AG04450 (cell line): ENCODE measurements at regions of chr15 and their contacts with region 1.

Region 1: DNA sequence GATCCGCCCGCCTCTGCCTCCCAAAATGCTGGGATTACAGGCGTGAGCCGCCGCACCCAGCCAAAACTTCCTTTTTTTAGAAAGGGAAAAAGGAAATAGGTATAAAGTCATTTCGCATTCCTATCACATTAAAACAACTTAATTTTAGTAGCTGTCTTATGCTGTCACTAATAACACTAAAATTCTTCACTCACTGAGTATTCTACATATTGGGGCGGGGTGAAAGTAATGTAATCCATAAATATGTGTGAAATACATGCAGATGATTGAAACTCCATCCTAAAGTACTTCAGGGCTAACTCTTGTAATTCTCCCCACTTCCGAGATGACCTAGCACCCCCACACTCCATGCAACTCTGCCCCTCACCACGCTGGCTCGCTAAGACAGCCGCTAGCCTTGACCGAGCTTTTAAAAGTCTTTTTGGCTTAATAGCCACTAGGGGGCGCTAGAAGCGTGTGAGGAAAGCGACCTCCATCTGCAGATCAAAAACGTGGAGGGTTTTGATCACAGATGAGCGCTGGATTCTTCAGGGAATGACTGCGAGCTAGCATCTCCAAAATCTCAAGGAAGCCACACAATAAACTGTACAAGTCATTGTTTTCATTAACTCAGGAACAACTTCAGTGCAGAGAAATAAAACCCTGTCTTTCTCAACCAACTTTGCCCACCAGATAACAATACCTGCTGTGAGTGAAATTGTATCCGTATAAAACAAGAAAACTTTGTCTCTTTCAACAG is 129.3 kb upstream of the IGF1R start:
- DNase-seq: peak; percentile 52
- H3K4me3 ChIP-seq: no peak overlapping the region
- H3K27ac ChIP-seq: no peak overlapping the region
- H3K27me3 ChIP-seq: no peaks in the 10 kb centered on the region
- CTCF ChIP-seq: peak; percentile 82

Region 2: DNA sequence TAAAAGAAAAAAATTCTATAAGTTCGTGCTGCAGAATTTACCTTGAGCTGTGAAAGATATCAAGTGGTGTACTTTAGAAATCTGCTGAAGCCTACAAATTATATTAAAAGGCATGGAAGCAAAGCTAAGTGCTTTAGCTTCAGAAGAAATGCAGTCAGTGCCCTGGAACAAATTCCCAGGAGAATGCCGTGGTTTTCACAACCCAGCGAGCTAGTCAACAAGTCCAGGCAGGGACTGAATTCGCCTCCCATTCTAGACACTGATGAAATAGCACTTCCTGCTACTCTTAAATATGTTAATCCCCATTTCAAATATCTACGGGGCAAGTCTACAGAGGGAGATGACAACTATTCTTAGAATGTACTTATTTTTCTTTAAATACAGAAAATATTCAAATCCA is 197.1 kb before region 1 on chr15:
- CTCF ChIA-PET with region 1: no interaction called
- POLR2A ChIA-PET with region 1: no interaction called
- DNase-seq: no peak
- H3K4me3 ChIP-seq: no peak overlapping the region
- H3K27ac ChIP-seq: no peak overlapping the region
- H3K27me3 ChIP-seq: no peaks in the 10 kb centered on the region
- CTCF ChIP-seq: no peak

Region 3: GRCh38 chr15:98442379-98442833 is 76.6 kb before region 1 on chr15:
- CTCF ChIA-PET with region 1: interaction called, 12 read pairs
- POLR2A ChIA-PET with region 1: no interaction called
- DNase-seq: peak; percentile 34
- H3K4me3 ChIP-seq: no peak overlapping the region
- H3K27ac ChIP-seq: no peak overlapping the region
- H3K27me3 ChIP-seq: no peaks in the 10 kb centered on the region
- CTCF ChIP-seq: peak; percentile 91

Region 4: DNA sequence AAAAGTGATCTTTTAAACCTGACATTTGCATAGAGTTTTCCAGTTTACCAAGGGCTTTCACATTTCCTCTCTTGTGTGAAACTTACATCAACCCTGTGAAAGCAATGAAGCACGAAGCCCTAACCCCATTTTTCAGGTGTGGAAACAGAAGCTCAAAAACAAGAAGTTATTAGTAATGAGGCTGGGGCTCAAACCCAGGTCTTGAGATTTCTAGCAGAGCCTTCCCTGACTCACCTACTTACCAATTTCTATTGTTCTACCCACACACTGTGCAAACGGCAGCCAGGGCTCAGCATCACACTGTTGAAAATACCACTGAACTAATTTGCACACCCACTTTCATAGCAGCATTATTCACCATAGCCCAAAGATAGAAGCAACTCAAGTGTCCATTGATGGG is 11.6 kb after region 1 on chr15:
- CTCF ChIA-PET with region 1: interaction called, 24 read pairs
- POLR2A ChIA-PET with region 1: no interaction called
- DNase-seq: no peak
- H3K4me3 ChIP-seq: no peak overlapping the region
- H3K27ac ChIP-seq: no peak overlapping the region
- H3K27me3 ChIP-seq: peaks cover 6% of the 10 kb centered on the region
- CTCF ChIP-seq: no peak

Region 5: DNA sequence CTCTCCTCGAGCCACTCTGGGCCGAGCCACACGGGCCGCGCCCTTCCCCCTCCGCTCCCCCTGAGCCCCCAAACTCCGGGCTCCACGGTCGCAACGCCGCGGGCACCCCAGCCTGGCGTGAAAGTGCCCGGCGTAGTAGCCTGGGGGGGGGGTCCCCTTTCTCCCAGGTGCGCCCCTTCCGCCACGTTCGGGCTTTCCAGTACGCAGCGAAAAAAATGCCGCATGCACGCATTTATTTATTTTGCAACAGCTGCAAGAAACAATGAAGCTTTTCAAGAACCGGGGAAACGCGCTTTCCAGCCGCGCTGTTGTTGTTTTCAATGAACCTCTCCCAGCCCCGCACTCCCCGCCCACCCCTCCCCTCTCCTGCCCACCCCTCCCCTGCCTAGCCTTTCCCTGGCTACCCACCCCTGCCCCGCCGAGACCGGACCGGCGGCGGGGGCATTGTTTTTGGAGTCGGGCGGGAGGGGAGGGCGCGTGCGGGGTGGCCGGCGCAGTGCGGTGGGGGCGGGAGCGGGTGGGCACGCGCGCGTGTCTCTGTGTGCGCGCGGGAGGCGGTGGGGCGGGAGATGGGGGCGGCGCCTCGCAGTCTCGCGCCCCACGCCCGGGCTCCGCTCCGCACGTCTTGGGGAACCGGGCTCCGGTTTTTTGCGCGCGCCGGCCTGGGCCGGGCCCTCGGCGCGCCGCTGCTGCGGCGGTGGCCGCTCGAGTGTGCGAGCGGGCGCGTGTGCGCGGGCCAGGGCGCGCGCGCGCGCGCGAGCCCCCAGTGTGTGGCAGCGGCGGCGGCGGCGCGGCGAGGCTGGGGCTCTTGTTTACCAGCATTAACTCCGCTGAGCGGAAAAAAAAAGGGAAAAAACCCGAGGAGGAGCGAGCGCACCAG is 129.0 kb after region 1 on chr15 and contains the start of gene IGF1R:
- CTCF ChIA-PET with region 1: interaction called, 94 read pairs
- POLR2A ChIA-PET with region 1: no interaction called
- DNase-seq: peak; percentile 54
- H3K4me3 ChIP-seq: peak within 1 kb of the TSS; percentile 88
- H3K27ac ChIP-seq: peak within 1 kb of the TSS; percentile 80
- H3K27me3 ChIP-seq: peaks cover 17% of the 10 kb centered on the region
- CTCF ChIP-seq: no peak
- polyA plus RNA-seq, gene IGF1R: 21.6 and 35.4 TPM in 2 replicates

Region 6: GRCh38 chr15:98734466-98735199 is 215.6 kb after region 1 on chr15:
- CTCF ChIA-PET with region 1: no interaction called
- POLR2A ChIA-PET with region 1: no interaction called
- DNase-seq: no peak
- H3K4me3 ChIP-seq: no peak overlapping the region
- H3K27ac ChIP-seq: peak overlapping the region; percentile 11
- H3K27me3 ChIP-seq: no peaks in the 10 kb centered on the region
- CTCF ChIP-seq: no peak

Region 7: GRCh38 chr15:98850961-98851573 is 332.1 kb after region 1 on chr15:
- CTCF ChIA-PET with region 1: interaction called, 24 read pairs
- POLR2A ChIA-PET with region 1: no interaction called
- DNase-seq: no peak
- H3K4me3 ChIP-seq: peak overlapping the region; percentile 10
- H3K27ac ChIP-seq: peak overlapping the region; percentile 80
- H3K27me3 ChIP-seq: no peaks in the 10 kb centered on the region
- CTCF ChIP-seq: peak; percentile 87

Region 8: GRCh38 chr15:99076552-99077308 is 557.7 kb after region 1 on chr15:
- CTCF ChIA-PET with region 1: interaction called, 78 read pairs
- POLR2A ChIA-PET with region 1: interaction called, 4 read pairs
- DNase-seq: peak; percentile 67
- H3K4me3 ChIP-seq: peak overlapping the region; percentile 48
- H3K27ac ChIP-seq: no peak overlapping the region
- H3K27me3 ChIP-seq: no peaks in the 10 kb centered on the region
- CTCF ChIP-seq: peak; percentile 91